ENCODE measurements at regions of chr2 and their contacts with region 1.

Region 1: DNA sequence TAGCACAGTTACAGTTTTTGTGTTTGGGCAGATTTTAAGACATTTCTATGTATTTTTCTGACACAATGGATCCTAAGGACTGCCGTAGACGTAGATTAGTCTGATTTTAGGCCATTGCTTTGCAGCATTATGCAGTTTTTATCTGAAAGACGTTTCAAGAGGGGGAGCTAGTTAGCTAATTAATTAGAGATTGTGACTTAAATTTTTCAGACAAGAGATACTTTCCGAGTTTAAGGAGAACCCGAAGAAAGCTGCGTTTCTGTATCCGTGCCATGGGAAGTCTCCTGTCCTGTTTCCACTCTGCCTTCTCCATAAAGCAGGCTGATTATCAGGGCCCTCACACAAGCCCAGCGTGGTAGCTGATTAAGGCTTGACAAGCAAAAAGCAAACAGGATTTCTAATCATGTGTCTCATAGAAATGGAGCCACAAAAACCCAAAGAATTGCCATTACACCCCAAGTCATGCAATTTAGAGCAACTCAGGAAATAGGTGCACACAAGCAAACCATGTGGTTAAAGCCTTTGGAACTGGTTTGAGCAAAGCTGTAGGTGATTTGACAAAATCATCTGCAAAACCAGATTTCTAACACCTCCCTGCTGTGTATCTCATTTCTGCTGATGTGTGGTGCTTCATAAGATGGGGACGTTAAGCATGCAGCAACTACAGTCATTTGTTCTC is 808.1 kb downstream of the RNF144A start:
- DNase-seq: peak in 7 of 9 experiments; percentile 18 to 91 (median 32)
- ATAC-seq: peak; percentile 79
- H3K4me3 ChIP-seq: peak overlapping the region; percentile 48 to 58
- H3K4me3 Mint-ChIP-seq: peak overlapping the region; percentile 90
- H3K27ac ChIP-seq: peak overlapping the region; percentile 6 to 77
- H3K27ac Mint-ChIP-seq: peak overlapping the region; percentile 94
- H3K4me1 ChIP-seq: peaks cover 29% of the 10 kb centered on the region
- H3K4me1 Mint-ChIP-seq: peaks cover 70% of the 10 kb centered on the region
- H3K27me3 ChIP-seq: no peaks in the 10 kb centered on the region
- H3K27me3 Mint-ChIP-seq: no peaks in the 10 kb centered on the region
- CTCF ChIP-seq: no peak

Region 2: GRCh38 chr2:7744827-7745226 is 19.5 kb after region 1 on chr2:
- CTCF ChIA-PET with region 1: interaction called, 7 read pairs
- POLR2A ChIA-PET with region 1: interaction called, 9 read pairs
- intact Hi-C with region 1: loop called in 1 of 2 experiments (anchors 2 kb)
- DNase-seq: peak in 8 of 9 experiments; percentile 23 to 93 (median 48)
- ATAC-seq: peak; percentile 74
- H3K4me3 ChIP-seq: peak overlapping the region in 1 of 2 experiments; percentile 10
- H3K4me3 Mint-ChIP-seq: no peak overlapping the region
- H3K27ac ChIP-seq: peak overlapping the region in 1 of 2 experiments; percentile 66
- H3K27ac Mint-ChIP-seq: peak overlapping the region; percentile 72
- H3K4me1 ChIP-seq: peaks cover 21% of the 10 kb centered on the region
- H3K4me1 Mint-ChIP-seq: peaks cover 62% of the 10 kb centered on the region
- H3K27me3 ChIP-seq: no peaks in the 10 kb centered on the region
- H3K27me3 Mint-ChIP-seq: no peaks in the 10 kb centered on the region
- CTCF ChIP-seq: no peak

Measured in CD8-positive, alpha-beta T cell (primary cell).